WTC11 (cell line): ENCODE measurements at regions of chr15 and their contacts with region 1.

Region 1: GRCh38 chr15:40044717-40045571 is 6.0 kb upstream of the SRP14 start:
- DNase-seq: peak; percentile 85
- ATAC-seq: peak; percentile 96
- H3K4me3 Mint-ChIP-seq: peak overlapping the region; percentile 65
- H3K27ac Mint-ChIP-seq: no peak overlapping the region
- H3K4me1 Mint-ChIP-seq: peaks cover 39% of the 10 kb centered on the region
- H3K27me3 Mint-ChIP-seq: no peaks in the 10 kb centered on the region
- CTCF ChIP-seq: peak; percentile 45; the same call in 1 of the 2 replicates

Region 2: GRCh38 chr15:39801641-39802309 is 243.2 kb before region 1 on chr15:
- CTCF ChIA-PET with region 1: no interaction called
- POLR2A ChIA-PET with region 1: no interaction called
- DNase-seq: peak; percentile 49
- ATAC-seq: peak; percentile 85
- H3K4me3 Mint-ChIP-seq: no peak overlapping the region
- H3K27ac Mint-ChIP-seq: no peak overlapping the region; the same call in 1 of the 2 replicates
- H3K4me1 Mint-ChIP-seq: peaks cover 32% of the 10 kb centered on the region
- H3K27me3 Mint-ChIP-seq: no peaks in the 10 kb centered on the region
- CTCF ChIP-seq: peak; percentile 65

Region 3: DNA sequence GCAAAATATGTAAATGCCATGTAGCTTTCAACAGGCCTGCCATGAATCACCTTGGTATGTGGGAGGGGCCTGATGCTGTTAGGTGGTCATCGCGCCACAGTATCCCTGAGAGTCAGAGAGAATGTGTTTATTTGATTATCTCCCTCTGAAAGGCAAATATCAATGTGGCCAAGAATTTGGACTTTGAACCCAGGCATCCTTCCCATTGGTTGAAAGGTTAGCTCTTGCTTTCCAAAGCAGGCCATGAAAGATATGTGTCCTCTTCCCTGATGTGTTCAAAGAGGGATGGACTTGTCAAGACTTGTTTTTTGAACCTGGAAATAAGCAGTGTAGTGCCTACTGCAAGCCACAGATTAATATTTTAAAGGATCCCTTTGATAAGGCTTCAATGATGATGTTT is 42.6 kb before region 1 on chr15:
- CTCF ChIA-PET with region 1: no interaction called
- POLR2A ChIA-PET with region 1: no interaction called
- DNase-seq: no peak
- ATAC-seq: 0 out of 2 replicates have a peak, but pooled peaks have one; percentile 36
- H3K4me3 Mint-ChIP-seq: no peak overlapping the region
- H3K27ac Mint-ChIP-seq: peak overlapping the region; percentile 70
- H3K4me1 Mint-ChIP-seq: peaks cover 16% of the 10 kb centered on the region
- H3K27me3 Mint-ChIP-seq: no peaks in the 10 kb centered on the region
- CTCF ChIP-seq: no peak

Region 4: GRCh38 chr15:40032125-40032839 is 12.7 kb before region 1 on chr15:
- CTCF ChIA-PET with region 1: interaction called, 11 read pairs
- POLR2A ChIA-PET with region 1: no interaction called
- DNase-seq: no peak
- ATAC-seq: no peak
- H3K4me3 Mint-ChIP-seq: no peak overlapping the region
- H3K27ac Mint-ChIP-seq: no peak overlapping the region
- H3K4me1 Mint-ChIP-seq: peaks cover under 1% of the 10 kb centered on the region; the same call in 1 of the 2 replicates
- H3K27me3 Mint-ChIP-seq: no peaks in the 10 kb centered on the region
- CTCF ChIP-seq: no peak

Region 5: DNA sequence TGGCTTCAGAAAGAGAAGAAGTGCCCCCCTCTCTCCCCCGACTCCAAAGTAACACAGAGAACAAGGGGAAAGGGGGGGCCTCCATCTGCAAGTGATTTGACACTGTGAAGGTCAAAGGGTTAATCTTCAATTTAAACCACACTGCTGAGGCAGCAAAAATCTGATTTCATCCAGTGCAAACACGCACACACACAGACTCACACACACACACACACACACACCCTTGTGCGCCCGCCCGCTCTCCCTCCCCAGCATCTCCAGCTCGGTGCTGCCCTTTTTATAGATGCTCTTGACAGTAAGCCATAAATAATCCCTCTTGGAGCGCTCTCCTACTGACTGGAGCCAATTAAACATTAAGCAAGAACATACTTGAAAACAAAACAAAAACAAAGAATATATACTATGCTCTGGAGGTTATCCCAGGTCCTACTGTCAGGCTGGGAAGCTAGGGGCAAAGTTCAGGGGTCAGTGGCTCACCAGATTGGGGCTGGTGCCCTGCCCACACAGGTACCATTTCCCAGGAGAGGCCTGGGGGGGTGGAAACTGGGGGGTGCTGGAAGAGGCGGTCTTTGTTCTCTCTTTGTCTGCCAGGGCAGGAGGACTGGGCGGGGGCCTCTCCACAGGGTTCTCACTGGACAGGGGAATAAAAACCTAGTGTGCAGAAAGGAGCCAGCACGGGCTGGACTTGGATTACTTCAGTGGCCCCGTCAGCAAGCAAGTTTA is 47.5 kb after region 1 on chr15:
- CTCF ChIA-PET with region 1: interaction called, 15 read pairs
- POLR2A ChIA-PET with region 1: no interaction called
- DNase-seq: no peak
- ATAC-seq: no peak
- H3K4me3 Mint-ChIP-seq: peak overlapping the region; percentile 40
- H3K27ac Mint-ChIP-seq: peak overlapping the region; percentile 62
- H3K4me1 Mint-ChIP-seq: peaks cover 91% of the 10 kb centered on the region
- H3K27me3 Mint-ChIP-seq: no peaks in the 10 kb centered on the region; the same call in 1 of the 2 replicates
- CTCF ChIP-seq: no peak

Region 6: DNA sequence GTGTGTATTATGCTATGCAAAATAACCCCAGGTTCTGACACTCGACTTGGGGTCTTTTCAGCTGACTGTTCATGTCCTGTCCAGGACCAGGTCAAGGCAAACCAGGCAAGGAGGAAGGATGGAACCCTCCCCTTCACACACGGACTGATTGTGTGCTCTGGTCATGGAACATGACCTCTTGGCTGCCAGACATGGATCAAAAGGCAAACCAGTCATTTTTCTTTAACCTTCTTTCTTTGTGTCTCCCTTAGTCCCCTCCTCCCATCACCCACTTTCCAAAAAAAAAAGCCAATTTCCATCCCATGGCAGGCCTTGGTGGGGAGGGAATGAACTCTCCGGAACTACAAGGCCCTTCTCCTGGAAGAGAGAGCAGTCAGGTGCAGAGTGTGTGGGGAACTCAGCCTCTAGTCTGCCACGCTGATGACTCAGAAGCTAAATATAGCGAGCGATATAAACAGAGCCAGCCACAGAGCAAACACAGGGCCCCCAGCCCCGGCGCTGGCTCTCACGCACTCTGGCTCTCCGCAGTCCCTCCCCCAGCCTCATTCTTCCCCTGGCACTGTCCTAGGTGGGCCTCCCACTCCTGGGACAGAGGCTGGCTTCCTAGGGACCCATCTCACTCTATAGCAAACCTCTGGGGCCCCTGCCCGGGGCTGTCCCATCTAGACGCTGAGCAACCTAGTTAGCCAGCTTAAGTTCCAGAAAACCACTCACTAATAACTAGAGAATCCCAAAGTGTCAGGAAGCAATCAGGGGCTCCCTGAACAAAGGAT is 53.7 kb after region 1 on chr15:
- CTCF ChIA-PET with region 1: interaction called, 120 read pairs
- POLR2A ChIA-PET with region 1: interaction called, 7 read pairs
- DNase-seq: no peak
- ATAC-seq: peak; percentile 2; the same call in 1 of the 2 replicates
- H3K4me3 Mint-ChIP-seq: no peak overlapping the region
- H3K27ac Mint-ChIP-seq: peak overlapping the region; percentile 90; the same call in 1 of the 2 replicates
- H3K4me1 Mint-ChIP-seq: peaks cover 78% of the 10 kb centered on the region
- H3K27me3 Mint-ChIP-seq: no peaks in the 10 kb centered on the region
- CTCF ChIP-seq: no peak

Region 7: DNA sequence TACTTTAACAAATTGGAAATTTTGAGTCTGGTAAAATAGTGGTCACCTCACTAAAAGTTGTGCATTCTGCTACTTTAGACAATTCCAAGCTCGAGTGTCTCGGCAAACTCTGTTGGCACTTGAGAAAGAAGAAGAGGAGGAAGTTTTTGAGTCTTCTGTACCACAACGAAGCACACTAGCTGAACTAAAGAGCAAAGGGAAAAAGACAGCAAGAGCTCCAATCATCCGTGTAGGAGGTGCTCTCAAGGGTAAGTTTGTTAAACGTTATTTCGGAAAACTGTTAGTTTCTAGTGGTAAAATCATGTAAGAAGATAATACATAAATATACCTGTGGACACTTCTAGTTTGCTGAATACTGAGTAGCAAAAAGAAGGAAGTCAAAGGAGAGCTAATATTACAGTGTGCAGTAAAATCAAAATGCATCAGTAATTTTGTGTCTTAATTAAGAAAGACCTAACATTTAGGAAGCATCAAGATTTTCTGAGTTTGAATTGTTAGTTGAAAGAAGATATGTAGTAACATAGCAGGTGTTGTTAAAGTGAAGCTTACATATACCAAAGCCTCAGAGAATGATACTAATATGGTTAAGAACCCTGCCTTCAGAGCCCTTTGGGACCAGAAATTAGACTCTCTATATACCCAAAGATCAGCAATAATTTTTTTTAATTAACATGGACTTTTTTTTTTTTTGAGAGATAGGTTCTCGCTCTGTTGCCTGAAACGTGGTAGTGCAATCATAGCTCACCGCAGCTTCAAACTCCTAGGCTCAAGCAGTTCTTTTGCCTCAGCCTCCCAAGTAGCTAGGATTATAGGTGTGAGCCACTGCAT is 138.9 kb after region 1 on chr15:
- CTCF ChIA-PET with region 1: interaction called, 10 read pairs
- POLR2A ChIA-PET with region 1: no interaction called
- DNase-seq: no peak
- ATAC-seq: no peak
- H3K4me3 Mint-ChIP-seq: no peak overlapping the region
- H3K27ac Mint-ChIP-seq: peak overlapping the region; percentile 81
- H3K4me1 Mint-ChIP-seq: no peaks in the 10 kb centered on the region
- H3K27me3 Mint-ChIP-seq: no peaks in the 10 kb centered on the region
- CTCF ChIP-seq: no peak